ENCODE measurements at regions of chr13 and their contacts with region 1.

Region 1: GRCh38 chr13:36395280-36395679 is 37.0 kb upstream of the CCNA1 start:
- DNase-seq: no peak
- ATAC-seq: peak; percentile 62 to 85
- H3K4me3 ChIP-seq: no peak overlapping the region
- H3K27ac ChIP-seq: no peak overlapping the region
- H3K4me1 ChIP-seq: no peaks in the 10 kb centered on the region
- H3K27me3 ChIP-seq: no peaks in the 10 kb centered on the region

Region 2: DNA sequence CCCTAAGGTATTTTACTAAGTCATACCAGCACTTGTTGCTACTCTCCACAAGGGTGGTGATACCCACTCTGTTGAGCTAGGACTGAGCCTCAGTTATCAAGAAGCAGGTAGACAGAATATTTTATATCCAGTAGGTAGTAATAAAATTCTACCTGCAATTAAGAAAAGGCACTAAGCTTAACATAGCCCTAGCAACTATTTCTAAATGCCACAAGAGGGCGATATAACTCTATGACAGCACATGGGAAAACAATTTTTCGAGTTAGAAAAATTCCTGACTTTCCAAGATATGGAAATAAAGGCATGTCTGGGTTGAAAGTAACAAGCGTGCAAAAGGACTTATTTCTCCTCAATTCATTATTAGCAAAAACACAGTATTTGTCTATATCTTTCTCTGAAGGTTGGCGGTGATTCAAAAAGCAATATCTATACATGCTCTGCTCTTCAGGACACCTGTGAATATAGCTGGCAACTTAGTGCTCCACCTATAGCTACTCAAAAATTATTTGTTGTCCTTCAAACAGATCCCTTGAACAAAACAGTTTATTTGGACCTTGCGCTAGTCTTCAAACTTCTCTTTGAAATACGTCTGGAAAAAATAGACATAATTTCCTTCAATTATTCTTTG is 112.3 kb before region 1 on chr13:
- intact Hi-C with region 1: loop called in 3 of 4 experiments (anchors 5 to 10 kb)
- DNase-seq: no peak
- ATAC-seq: no peak
- H3K4me3 ChIP-seq: no peak overlapping the region
- H3K27ac ChIP-seq: no peak overlapping the region
- H3K4me1 ChIP-seq: no peaks in the 10 kb centered on the region
- H3K27me3 ChIP-seq: no peaks in the 10 kb centered on the region

Region 3: DNA sequence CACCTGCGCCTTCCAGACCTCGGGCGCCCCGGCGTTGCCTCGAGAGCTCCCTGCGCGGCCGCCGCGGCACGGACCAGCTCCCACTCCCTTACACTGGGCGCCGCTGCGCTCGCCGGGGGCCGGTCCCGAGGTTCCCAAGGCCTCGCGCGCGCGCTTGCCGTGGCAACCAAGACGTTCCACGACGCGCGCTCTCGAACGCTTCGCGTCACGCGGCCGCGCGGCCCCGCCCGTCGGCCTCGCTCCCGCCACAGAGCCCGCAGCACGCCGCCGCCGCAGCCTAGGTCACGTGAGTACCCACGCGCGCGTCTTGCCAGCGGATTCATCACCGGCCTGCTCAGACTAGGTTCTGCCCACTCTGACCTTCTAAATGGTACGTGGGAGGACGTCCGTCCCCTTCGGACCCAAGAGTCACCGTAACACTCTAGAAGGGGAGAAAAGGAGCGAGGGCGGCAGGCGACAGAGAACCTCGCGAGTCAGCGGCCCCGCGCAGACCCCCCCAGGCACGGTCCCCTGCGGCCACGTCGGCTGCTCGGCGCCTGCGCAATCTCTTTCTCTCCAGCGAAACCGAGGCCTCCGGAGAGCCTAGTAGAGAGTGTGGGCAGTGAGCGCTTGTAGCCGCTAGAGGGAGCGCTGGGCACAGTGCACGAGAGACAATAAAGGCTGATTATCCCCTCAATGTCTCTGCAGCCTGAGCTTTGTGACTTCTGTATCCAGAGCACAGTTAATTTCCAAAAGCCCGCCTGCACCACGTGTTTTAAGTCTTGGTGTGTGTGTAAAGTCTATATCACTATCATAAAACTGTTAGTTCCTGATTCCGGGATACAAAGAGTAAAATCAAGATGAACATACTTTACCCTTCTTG is 48.8 kb before region 1 on chr13 and contains the start of gene SPART:
- intact Hi-C with region 1: loop called in 1 of 4 experiments (anchors 5 kb)
- DNase-seq: peak; percentile 93 to 97 (median 97)
- ATAC-seq: peak; percentile 95
- H3K4me3 ChIP-seq: peak within 1 kb of the TSS; percentile 71
- H3K27ac ChIP-seq: peak within 1 kb of the TSS; percentile 98
- H3K4me1 ChIP-seq: peaks cover 2% of the 10 kb centered on the region
- H3K27me3 ChIP-seq: no peaks in the 10 kb centered on the region
- total RNA-seq, gene SPART: 41.9 to 61.4 (median 52.5) TPM

Measured in right cardiac atrium (tissue), 5 donors.